ENCODE measurements at regions of chr2 and their contacts with region 1.

Region 1: GRCh38 chr2:232600053-232600773 is 33.2 kb upstream of the EFHD1 start:
- DNase-seq: no peak
- ATAC-seq: no peak
- H3K4me3 ChIP-seq: no peak overlapping the region
- H3K27ac ChIP-seq: no peak overlapping the region
- H3K4me1 ChIP-seq: no peaks in the 10 kb centered on the region
- H3K27me3 ChIP-seq: no peaks in the 10 kb centered on the region
- CTCF ChIP-seq: no peak
- POLR2A ChIP-seq: no peak

Region 2: DNA sequence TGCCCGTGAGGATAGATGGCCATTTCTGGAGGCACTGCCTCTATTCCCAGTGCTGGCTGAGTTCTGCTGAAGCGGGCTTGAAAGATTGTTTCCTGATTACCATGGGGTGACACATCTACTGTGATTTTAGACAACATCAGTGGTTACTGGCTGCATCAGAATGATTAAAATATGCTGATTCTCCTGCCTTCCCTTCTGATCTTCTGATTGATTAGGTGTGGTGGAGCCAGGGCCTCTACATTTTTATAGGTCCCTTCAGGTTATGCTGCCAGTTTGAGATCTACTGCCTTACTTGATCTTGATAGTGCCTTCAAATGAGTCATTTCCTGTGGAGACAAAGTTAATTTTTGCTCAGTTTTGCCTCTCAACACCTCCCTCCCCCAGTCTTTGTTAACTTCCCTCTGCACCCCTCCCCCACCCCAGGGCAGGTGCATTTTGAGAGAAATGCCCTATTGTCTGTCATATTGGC is 238.2 kb after region 1 on chr2:
- intact Hi-C with region 1: loop called in 1 of 10 experiments (anchors 10 kb)
- DNase-seq: no peak
- ATAC-seq: peak in 2 of 4 donors; percentile 17 to 21
- H3K4me3 ChIP-seq: no peak overlapping the region
- H3K27ac ChIP-seq: peak overlapping the region in 1 of 12 donors; percentile 72
- H3K4me1 ChIP-seq: peaks cover 0 to 41% (median 27%) of the 10 kb centered on the region in 12 donors
- H3K27me3 ChIP-seq: no peaks in the 10 kb centered on the region
- CTCF ChIP-seq: no peak
- POLR2A ChIP-seq: no peak

Region 3: GRCh38 chr2:233026192-233026813 is 426.1 kb after region 1 on chr2:
- intact Hi-C with region 1: loop called in 1 of 10 experiments (anchors 10 kb)
- DNase-seq: no peak
- ATAC-seq: no peak
- H3K4me3 ChIP-seq: no peak overlapping the region
- H3K27ac ChIP-seq: no peak overlapping the region
- H3K4me1 ChIP-seq: no peaks in the 10 kb centered on the region
- H3K27me3 ChIP-seq: no peaks in the 10 kb centered on the region
- CTCF ChIP-seq: no peak
- POLR2A ChIP-seq: no peak

Region 4: GRCh38 chr2:233053928-233054784 is 453.9 kb after region 1 on chr2:
- intact Hi-C with region 1: loop called in 3 of 10 experiments (anchors 5 to 10 kb)
- DNase-seq: peak; percentile 47 to 81 (median 56)
- ATAC-seq: peak in 2 of 4 donors; percentile 50 to 51
- H3K4me3 ChIP-seq: no peak overlapping the region
- H3K27ac ChIP-seq: no peak overlapping the region
- H3K4me1 ChIP-seq: peaks cover 0 to 29% (median 13%) of the 10 kb centered on the region in 12 donors
- H3K27me3 ChIP-seq: peaks cover 0 to 16% (median 0%) of the 10 kb centered on the region in 9 donors
- CTCF ChIP-seq: peak; percentile 77 to 96 (median 90)
- POLR2A ChIP-seq: no peak

Measured in heart left ventricle (tissue), 16 donors.